ENCODE measurements at regions of chr1 and their contacts with region 1.

Region 1: DNA sequence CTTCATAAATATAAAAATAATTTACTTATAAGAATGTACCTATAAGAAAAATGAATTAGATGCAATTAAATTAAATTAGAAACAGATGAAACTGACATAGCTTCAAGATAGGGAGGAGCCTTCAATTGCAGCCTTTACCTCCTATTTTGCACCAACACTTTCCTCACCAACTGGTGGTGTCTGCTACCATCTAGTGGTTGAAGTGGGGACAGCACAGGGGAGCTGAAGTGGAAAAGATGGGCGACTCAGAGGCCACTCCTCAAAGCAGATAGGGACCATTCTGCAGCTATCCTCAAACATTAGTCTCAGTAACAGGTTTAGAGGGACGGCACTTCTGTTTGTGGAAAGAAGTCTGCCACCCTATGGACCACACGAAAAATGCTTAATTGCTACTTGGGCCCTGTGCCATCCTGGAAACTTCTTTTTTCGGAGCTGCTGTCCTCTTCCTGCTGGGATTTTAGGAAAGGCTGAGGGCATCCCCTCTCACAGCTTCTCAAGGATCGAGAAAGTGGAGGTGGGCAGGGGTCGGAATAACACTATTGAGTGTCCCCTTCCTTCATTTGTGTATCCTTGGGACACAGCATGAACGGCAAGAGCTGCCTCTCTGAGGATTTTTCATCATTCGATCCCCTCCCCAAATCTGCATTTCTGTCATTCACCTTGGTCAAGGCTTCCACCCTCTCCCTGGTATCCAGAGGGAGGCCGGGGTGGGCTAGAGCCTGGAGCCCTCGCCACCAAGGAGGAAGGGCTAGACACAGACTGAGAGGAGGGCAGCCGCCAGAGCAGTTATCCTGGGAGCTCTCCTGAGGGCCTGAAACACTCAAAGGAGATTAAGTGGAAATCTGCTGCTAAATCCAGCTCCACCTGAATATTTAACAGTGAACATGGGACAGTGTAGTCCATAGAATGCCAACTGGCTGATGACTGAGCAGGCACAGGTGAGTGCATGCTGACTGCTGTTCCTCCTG is 9.6 kb downstream of the PROK1 start:
- DNase-seq: peak; percentile 80
- H3K4me3 ChIP-seq: no peak overlapping the region
- H3K27ac ChIP-seq: no peak overlapping the region
- H3K4me1 ChIP-seq: peaks cover 30% of the 10 kb centered on the region
- H3K27me3 ChIP-seq: no peaks in the 10 kb centered on the region
- CTCF ChIP-seq: peak; percentile 100

Region 2: GRCh38 chr1:110024613-110025012 is 435.9 kb before region 1 on chr1:
- CTCF ChIA-PET with region 1: interaction called, 6 read pairs
- POLR2A ChIA-PET with region 1: interaction called, 4 read pairs
- intact Hi-C with region 1: loop called (anchors 5 kb)
- DNase-seq: no peak
- H3K4me3 ChIP-seq: no peak overlapping the region
- H3K27ac ChIP-seq: no peak overlapping the region
- H3K4me1 ChIP-seq: no peaks in the 10 kb centered on the region
- H3K27me3 ChIP-seq: no peaks in the 10 kb centered on the region
- CTCF ChIP-seq: no peak

Region 3: DNA sequence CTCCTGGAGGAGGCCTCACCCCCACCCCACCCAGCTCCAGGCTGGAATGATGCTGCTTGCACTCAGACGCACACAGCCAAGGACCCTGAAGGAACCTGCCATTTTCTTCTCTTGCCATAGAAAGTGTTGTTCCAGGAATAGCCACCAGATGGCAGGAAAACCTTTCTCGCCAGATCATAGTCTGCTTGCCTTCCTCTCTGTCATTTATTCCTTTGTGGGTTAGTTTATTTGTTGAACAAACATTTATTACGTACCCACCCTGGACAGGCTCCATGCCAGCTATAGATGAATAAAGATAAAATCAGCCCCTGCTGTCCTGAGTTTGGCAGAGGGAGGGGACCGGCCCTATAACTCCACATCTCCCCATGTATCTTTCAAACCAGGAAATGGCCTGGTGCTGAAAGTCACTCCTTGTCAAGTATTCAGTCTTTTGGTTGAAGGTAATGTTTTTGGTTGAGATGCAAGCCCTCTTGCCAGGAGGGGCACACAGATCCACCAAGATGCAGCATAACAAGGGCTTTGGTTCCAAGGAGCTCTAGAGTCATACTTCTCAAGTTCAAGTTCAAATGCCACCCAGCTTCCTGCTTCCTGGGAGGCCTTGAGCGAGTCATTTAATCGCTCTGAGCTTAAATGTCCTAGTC is 257.4 kb before region 1 on chr1:
- CTCF ChIA-PET with region 1: interaction called, 20 read pairs
- POLR2A ChIA-PET with region 1: interaction called, 8 read pairs
- intact Hi-C with region 1: loop called (anchors 1 kb)
- DNase-seq: peak; percentile 55 to 83
- H3K4me3 ChIP-seq: no peak overlapping the region
- H3K27ac ChIP-seq: peak overlapping the region; percentile 19
- H3K4me1 ChIP-seq: peaks cover 35% of the 10 kb centered on the region
- H3K27me3 ChIP-seq: no peaks in the 10 kb centered on the region
- CTCF ChIP-seq: peak; percentile 99

Region 4: DNA sequence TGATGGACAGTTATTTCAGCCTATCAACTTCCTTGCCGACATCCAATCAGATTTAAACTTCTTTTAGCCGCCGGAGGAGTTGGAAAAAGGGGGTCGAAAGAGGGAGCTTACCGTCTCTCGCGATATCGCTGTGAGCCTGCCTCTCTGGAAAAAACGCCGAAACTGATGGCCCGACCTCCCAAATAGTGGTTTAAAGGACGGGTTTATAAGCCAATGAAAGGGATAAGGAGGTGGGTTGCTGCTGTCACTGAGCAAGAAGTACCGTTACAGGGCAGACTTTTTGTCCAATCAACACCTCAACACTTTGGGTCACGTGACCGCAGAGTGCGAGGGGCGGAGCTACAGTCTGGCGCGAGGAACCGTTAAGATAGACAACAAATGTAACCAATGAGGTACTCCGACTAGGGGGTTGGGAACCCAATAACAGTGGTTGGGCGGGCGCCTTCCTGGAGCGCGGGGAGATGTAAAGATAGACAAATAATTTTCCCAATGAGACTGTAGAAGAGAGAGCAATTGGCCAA is 121.6 kb before region 1 on chr1 and contains the start of gene RBM15:
- CTCF ChIA-PET with region 1: interaction called, 3 read pairs
- POLR2A ChIA-PET with region 1: interaction called, 8 read pairs
- intact Hi-C with region 1: loop called (anchors 5 kb)
- DNase-seq: peak; percentile 97 to 100
- H3K4me3 ChIP-seq: peak within 1 kb of the TSS; percentile 77
- H3K27ac ChIP-seq: peak within 1 kb of the TSS; percentile 88
- H3K4me1 ChIP-seq: peaks cover 64% of the 10 kb centered on the region
- H3K27me3 ChIP-seq: no peaks in the 10 kb centered on the region
- CTCF ChIP-seq: no peak
- total RNA-seq, gene RBM15: 42.7 and 43.1 TPM in 2 replicates

Region 5: GRCh38 chr1:110412576-110412975 is 48.0 kb before region 1 on chr1:
- CTCF ChIA-PET with region 1: interaction called, 25 read pairs
- POLR2A ChIA-PET with region 1: interaction called, 17 read pairs
- intact Hi-C with region 1: loop called (anchors 1 kb)
- DNase-seq: peak; percentile 60 to 74
- H3K4me3 ChIP-seq: no peak overlapping the region
- H3K27ac ChIP-seq: no peak overlapping the region
- H3K4me1 ChIP-seq: peaks cover 9% of the 10 kb centered on the region
- H3K27me3 ChIP-seq: no peaks in the 10 kb centered on the region
- CTCF ChIP-seq: peak; percentile 96

Region 6: DNA sequence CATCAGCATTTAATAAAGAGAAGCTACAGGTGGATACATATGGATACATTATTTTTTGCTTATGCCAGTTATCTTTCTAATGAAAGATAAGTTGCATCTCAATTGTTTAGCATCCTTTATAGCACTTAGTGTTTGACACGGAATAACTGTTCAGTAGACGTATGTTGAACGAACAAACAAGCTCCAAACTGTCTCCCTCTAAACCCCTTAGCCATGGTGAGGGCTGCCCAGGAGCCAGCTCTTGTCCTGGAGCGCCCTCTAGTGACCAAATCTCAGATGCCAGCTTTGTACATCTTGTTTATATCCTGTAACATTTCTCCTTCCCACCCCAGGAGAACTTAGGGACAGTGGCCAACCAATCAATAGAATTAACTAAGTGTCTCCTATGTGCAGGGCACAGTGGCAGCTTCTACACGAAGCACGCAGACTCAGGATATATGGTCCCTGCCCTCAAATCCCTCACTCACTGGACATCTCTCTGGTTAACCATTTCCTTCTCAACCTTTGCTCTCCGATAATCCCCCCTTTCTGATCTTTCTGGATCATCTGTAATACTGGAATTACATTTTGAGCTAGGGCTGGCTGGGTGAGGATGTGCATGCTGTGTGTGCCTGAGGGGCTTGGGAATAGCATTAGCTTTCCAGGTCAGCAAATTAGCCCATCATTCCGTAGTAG is 35.5 kb after region 1 on chr1:
- CTCF ChIA-PET with region 1: interaction called, 12 read pairs
- POLR2A ChIA-PET with region 1: no interaction called
- intact Hi-C with region 1: loop called (anchors 1 kb)
- DNase-seq: peak; percentile 71 to 75
- H3K4me3 ChIP-seq: no peak overlapping the region
- H3K27ac ChIP-seq: no peak overlapping the region
- H3K4me1 ChIP-seq: no peaks in the 10 kb centered on the region
- H3K27me3 ChIP-seq: peaks cover 39% of the 10 kb centered on the region
- CTCF ChIP-seq: peak; percentile 100